ENCODE measurements at regions of chr5 and their contacts with region 1.

Region 1: DNA sequence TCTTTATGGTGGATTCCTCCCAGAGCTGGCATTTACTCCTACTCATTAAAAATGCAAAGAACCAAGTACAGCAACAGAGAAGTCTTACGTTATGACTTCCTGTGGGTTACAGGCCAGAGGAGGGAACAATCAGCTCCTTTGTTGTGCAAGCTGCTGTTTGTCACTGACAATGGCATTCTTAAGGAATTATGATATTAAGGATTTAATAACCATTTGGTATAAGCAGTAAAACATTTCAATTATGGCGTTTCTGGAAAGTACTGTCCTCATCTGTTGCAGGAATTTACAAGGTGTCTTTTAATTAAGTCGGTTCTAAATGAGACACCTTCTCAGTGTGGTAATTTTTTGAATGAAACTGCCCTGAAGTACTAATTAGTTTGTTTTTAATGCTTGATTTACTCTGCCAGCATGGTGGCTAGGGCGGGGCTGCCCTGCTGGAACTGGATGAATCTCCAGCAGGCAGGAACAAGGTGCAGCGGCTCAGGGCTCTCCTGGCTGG is 49.1 kb upstream of the VDAC1 start:
- DNase-seq: peak; percentile 68
- H3K4me3 Mint-ChIP-seq: peak overlapping the region; percentile 18
- H3K27ac Mint-ChIP-seq: peak overlapping the region; percentile 97
- H3K4me1 Mint-ChIP-seq: peaks cover 53% of the 10 kb centered on the region
- H3K27me3 Mint-ChIP-seq: no peaks in the 10 kb centered on the region
- CTCF ChIP-seq: no peak

Region 2: DNA sequence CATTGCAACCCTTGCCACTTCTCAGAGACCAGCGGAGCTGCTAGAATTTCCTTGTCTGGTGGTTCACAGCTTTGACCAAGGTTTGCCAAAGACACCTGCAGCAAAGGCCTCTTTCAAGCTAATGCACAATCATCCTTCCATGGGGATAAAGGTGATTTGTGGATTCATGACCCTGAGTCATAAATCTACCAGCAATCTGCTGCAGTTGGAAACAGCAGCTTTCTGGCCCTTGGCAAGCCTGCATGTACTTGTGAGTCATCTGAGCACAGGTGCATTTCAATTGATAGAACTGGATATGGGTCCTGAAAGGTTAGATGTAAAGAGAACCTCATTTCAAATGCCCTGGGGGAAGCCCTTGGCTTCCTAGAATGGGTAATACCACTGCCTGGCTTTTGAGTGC is 39.0 kb after region 1 on chr5:
- CTCF ChIA-PET with region 1: interaction called, 5 read pairs
- intact Hi-C with region 1: loop called (anchors 5 kb)
- DNase-seq: peak; percentile 65
- H3K4me3 Mint-ChIP-seq: peak overlapping the region; percentile 17
- H3K27ac Mint-ChIP-seq: peak overlapping the region; percentile 14
- H3K4me1 Mint-ChIP-seq: peaks cover 26% of the 10 kb centered on the region
- H3K27me3 Mint-ChIP-seq: no peaks in the 10 kb centered on the region
- CTCF ChIP-seq: no peak

Region 3: GRCh38 chr5:134101686-134102439 is 48.0 kb after region 1 on chr5:
- CTCF ChIA-PET with region 1: interaction called, 13 read pairs
- intact Hi-C with region 1: no loop called
- DNase-seq: peak; percentile 79
- H3K4me3 Mint-ChIP-seq: no peak overlapping the region
- H3K27ac Mint-ChIP-seq: no peak overlapping the region
- H3K4me1 Mint-ChIP-seq: peaks cover 28% of the 10 kb centered on the region
- H3K27me3 Mint-ChIP-seq: no peaks in the 10 kb centered on the region
- CTCF ChIP-seq: peak; percentile 93